H1 (cell line): ENCODE measurements at regions of chr9 and their contacts with region 1.

Region 1: DNA sequence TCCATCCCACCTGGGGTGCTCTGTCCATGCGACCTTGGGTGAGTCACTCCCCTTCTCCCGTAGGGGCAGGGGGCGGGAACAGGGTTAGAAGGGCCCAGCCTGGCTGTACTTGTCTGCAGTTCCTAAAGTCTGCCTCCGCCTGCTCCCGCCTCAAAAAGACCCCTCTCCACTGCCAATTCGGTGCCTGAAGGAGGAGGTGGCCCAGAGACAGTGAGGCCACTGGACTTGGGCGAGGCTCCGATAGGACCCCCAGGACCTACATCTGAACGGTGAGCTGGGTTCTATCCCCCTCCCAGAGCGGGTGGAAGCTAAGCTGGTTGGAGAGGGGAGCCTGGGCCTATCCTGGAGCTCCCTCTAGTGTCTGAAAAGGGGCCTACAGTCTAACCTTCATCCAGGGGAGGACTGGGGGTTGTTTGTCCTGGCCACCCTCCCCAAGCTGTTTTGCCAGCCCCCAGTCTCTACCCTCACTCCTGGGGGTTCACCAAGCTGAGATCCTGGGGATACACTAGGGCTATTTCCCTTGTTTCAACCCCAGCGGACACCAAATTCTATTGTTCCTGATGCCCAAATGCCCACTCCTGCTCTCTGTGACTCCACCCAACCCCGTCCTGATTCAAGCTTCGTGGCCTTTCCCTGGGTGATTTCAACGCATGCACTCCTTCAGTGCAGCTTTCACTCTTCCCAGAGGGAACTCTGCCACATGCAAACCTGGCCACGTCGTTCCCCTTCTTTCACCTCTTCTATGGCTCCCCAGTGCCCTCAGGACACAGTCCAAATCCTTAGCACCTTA is 6.1 kb upstream of the CRB2 start:
- DNase-seq: peak; percentile 46 to 91
- H3K4me3 ChIP-seq: peak overlapping the region in 1 of 4 experiments; percentile 35; a peak in 1 of 8 replicates
- H3K27ac ChIP-seq: no peak overlapping the region
- H3K4me1 ChIP-seq: peaks cover 0 to 11% (median under 1%) of the 10 kb centered on the region in 4 experiments; a peak in 4 of 7 replicates
- H3K27me3 ChIP-seq: no peaks in the 10 kb centered on the region; a peak in 2 of 7 replicates
- CTCF ChIP-seq: peak in 2 of 3 experiments; percentile 91 to 96; a peak in 3 of 4 replicates
- EP300 ChIP-seq: no peak
- POLR2A ChIP-seq: no peak
- RAD21 ChIP-seq: peak; percentile 100

Region 2: GRCh38 chr9:123102375-123103110 is 247.3 kb before region 1 on chr9:
- CTCF ChIA-PET with region 1: interaction called, 30 read pairs
- POLR2A ChIA-PET with region 1: interaction called, 3 read pairs
- DNase-seq: no peak
- H3K4me3 ChIP-seq: peak overlapping the region in 1 of 4 experiments; percentile 5; a peak in 1 of 8 replicates
- H3K27ac ChIP-seq: peak overlapping the region; percentile 87; the same call in 1 of the 2 replicates
- H3K4me1 ChIP-seq: peaks cover 3 to 16% (median 9%) of the 10 kb centered on the region in 4 experiments
- H3K27me3 ChIP-seq: no peaks in the 10 kb centered on the region
- CTCF ChIP-seq: no peak
- EP300 ChIP-seq: no peak; a peak in 1 of 3 replicates
- POLR2A ChIP-seq: peak in 1 of 2 experiments; percentile 48; a peak in 2 of 3 replicates
- RAD21 ChIP-seq: no peak

Region 3: GRCh38 chr9:123208626-123209174 is 141.2 kb before region 1 on chr9:
- CTCF ChIA-PET with region 1: no interaction called
- POLR2A ChIA-PET with region 1: no interaction called
- DNase-seq: no peak
- H3K4me3 ChIP-seq: no peak overlapping the region
- H3K27ac ChIP-seq: no peak overlapping the region
- H3K4me1 ChIP-seq: no peaks in the 10 kb centered on the region
- H3K27me3 ChIP-seq: no peaks in the 10 kb centered on the region
- CTCF ChIP-seq: no peak
- EP300 ChIP-seq: no peak
- POLR2A ChIP-seq: no peak
- RAD21 ChIP-seq: no peak

Region 4: DNA sequence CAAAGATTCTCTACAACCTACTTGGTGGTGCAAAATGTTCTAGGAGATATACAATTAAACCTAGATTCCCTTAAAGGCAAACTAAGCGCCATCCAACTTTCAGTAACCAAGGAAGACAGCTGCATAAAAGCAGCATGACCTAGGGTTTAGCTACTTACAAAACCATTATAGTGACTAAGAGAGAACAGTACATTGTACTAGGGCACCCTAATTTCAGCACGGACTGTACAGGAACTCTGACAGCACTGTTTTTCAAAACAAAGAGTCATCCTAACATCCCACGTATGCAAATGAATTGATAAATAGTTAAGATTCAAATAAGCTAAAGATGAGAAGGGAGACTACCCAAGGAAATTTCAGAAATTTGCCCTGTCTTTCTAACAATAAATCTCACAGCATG is 111.5 kb before region 1 on chr9:
- CTCF ChIA-PET with region 1: interaction called, 11 read pairs
- POLR2A ChIA-PET with region 1: no interaction called
- DNase-seq: no peak
- H3K4me3 ChIP-seq: no peak overlapping the region
- H3K27ac ChIP-seq: no peak overlapping the region
- H3K4me1 ChIP-seq: peaks cover 0 to 5% (median 1%) of the 10 kb centered on the region in 4 experiments; a peak in 5 of 7 replicates
- H3K27me3 ChIP-seq: no peaks in the 10 kb centered on the region
- CTCF ChIP-seq: no peak
- EP300 ChIP-seq: no peak
- POLR2A ChIP-seq: no peak
- RAD21 ChIP-seq: no peak

Region 5: DNA sequence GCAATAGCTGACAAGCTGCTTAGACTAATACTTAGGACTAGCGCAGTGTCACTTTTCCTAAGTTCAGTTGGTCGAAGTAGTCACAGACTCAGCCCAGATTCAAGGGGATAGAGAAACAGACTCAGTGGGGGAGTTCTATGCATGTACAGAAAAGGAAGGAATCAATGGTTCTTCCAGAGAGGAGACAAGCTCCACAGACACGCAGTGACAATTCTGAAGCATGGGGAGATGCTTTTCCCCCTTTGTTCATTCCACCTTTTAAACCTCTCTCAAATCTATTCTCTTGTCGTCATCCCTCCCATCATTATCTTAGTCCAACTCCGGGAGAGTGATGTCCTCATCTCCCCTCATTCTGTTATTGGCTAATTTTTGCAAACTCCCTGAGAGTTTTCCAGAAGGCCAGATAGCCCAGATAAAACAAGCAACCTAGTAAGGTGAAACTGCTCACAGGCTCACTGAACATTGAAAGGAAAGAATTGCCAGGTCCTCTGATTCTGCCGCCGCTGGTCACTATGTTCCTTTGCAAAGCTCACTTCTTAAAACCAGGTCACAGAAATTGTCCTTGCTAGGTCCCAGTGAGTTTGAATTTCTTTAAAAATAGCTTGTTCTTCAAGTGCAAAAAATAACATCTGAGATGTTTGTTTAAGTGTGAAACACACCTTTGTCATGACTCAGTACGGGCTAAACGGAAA is 68.1 kb before region 1 on chr9:
- CTCF ChIA-PET with region 1: no interaction called
- POLR2A ChIA-PET with region 1: no interaction called
- DNase-seq: no peak
- H3K4me3 ChIP-seq: no peak overlapping the region
- H3K27ac ChIP-seq: no peak overlapping the region
- H3K4me1 ChIP-seq: no peaks in the 10 kb centered on the region
- H3K27me3 ChIP-seq: no peaks in the 10 kb centered on the region; a peak in 1 of 7 replicates
- CTCF ChIP-seq: no peak
- EP300 ChIP-seq: no peak
- POLR2A ChIP-seq: no peak
- RAD21 ChIP-seq: no peak

Region 6: GRCh38 chr9:123326662-123327093 is 23.2 kb before region 1 on chr9:
- CTCF ChIA-PET with region 1: interaction called, 29 read pairs
- POLR2A ChIA-PET with region 1: no interaction called
- DNase-seq: no peak
- H3K4me3 ChIP-seq: no peak overlapping the region
- H3K27ac ChIP-seq: no peak overlapping the region
- H3K4me1 ChIP-seq: peaks cover 0 to 13% (median 6%) of the 10 kb centered on the region in 4 experiments; a peak in 6 of 7 replicates
- H3K27me3 ChIP-seq: peaks cover 0 to 5% (median 0%) of the 10 kb centered on the region in 4 experiments; a peak in 1 of 7 replicates
- CTCF ChIP-seq: no peak
- EP300 ChIP-seq: no peak
- POLR2A ChIP-seq: no peak
- RAD21 ChIP-seq: no peak

Region 7: GRCh38 chr9:123368023-123368422 is 18.1 kb after region 1 on chr9:
- CTCF ChIA-PET with region 1: interaction called, 44 read pairs
- POLR2A ChIA-PET with region 1: interaction called, 6 read pairs
- DNase-seq: no peak
- H3K4me3 ChIP-seq: no peak overlapping the region
- H3K27ac ChIP-seq: no peak overlapping the region
- H3K4me1 ChIP-seq: peaks cover 0 to 24% (median 13%) of the 10 kb centered on the region in 4 experiments; a peak in 5 of 7 replicates
- H3K27me3 ChIP-seq: peaks cover 0 to 15% (median 14%) of the 10 kb centered on the region in 4 experiments; a peak in 5 of 7 replicates
- CTCF ChIP-seq: no peak
- EP300 ChIP-seq: no peak
- POLR2A ChIP-seq: no peak
- RAD21 ChIP-seq: no peak

Region 8: GRCh38 chr9:123608104-123608503 is 258.2 kb after region 1 on chr9:
- CTCF ChIA-PET with region 1: no interaction called
- POLR2A ChIA-PET with region 1: no interaction called
- DNase-seq: peak in 1 of 2 experiments; percentile 20
- H3K4me3 ChIP-seq: no peak overlapping the region
- H3K27ac ChIP-seq: no peak overlapping the region
- H3K4me1 ChIP-seq: no peaks in the 10 kb centered on the region; a peak in 1 of 7 replicates
- H3K27me3 ChIP-seq: no peaks in the 10 kb centered on the region
- CTCF ChIP-seq: no peak
- EP300 ChIP-seq: no peak
- POLR2A ChIP-seq: no peak
- RAD21 ChIP-seq: no peak